GM12878 (cell line): ENCODE measurements at regions of chr21 and their contacts with region 1.

Region 1: DNA sequence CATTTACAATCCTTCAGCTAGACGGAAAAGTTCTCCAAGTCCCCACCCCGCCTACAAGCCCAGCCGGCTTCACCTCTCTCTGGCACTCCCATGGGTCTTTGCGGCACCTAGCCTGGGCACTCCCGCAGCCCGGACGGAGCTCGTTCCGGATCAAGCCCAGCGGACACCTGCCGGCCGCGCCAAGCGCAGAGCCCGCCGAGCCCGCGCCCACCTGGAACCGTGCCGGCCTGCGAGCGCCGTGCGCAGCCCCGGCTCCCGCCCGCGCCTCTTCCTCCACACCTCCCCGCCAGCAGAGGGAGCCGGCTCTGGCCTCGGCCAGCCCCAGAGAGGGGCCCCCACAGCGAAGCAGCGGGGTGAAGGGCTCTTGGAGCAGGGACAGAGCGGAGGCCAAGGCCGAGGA is 50.0 kb upstream of the KRTAP19-8 start:
- DNase-seq: no peak
- ATAC-seq: no peak
- H3K4me3 ChIP-seq: no peak overlapping the region
- H3K27ac ChIP-seq: no peak overlapping the region
- H3K4me1 ChIP-seq: no peaks in the 10 kb centered on the region
- H3K27me3 ChIP-seq: no peaks in the 10 kb centered on the region
- CTCF ChIP-seq: 0 out of 6 replicates have a peak, but pooled peaks of 1 of the 3 experiments have one; percentile 13
- EP300 ChIP-seq: no peak
- POLR2A ChIP-seq: no peak
- RAD21 ChIP-seq: no peak

Region 2: DNA sequence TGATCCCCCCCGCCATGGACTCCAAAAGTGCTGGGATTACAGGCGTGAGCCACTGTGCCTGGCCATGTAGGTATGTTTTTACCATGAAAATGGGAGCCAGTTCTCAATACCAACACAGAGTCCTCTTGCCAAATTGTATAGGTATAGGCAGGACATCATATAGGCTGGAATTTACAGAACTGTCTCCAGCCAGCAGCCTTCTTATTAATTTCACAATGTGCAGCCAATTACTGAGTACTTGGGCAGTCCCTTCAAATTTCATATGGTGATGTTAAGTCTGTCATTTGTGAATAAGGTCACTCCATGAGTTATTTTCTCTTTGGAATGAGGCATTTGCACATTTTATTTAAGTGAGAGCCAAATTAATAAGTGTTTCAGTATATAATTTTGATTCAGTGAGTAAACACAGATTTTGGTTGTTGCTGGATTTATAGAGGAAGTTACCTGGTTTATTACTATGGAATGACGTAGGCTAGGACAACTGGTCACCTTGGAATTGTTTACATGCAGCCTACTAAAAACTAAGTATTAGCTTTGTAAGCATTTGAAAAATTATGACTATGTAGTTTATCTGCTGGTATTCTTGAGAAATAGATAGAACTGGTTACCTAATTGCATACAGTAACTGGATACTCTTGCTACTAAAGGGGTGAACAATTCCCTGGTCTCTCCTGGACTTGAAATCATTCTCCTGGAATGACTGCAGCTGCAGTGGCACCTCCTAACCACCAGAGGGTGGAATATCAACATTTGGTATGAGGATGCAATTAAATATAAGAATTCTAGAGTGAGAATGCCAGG is 747.7 kb before region 1 on chr21:
- CTCF ChIA-PET with region 1: interaction called, 4 read pairs
- POLR2A ChIA-PET with region 1: no interaction called
- RAD21 ChIA-PET with region 1: interaction called, 5 read pairs
- SMC1A ChIA-PET with region 1: no interaction called
- in situ Hi-C with region 1: loop called (anchors 5 kb)
- intact Hi-C with region 1: loop called (anchors 1 kb)
- DNase-seq: no peak
- ATAC-seq: no peak
- H3K4me3 ChIP-seq: no peak overlapping the region
- H3K27ac ChIP-seq: no peak overlapping the region
- H3K4me1 ChIP-seq: no peaks in the 10 kb centered on the region
- H3K27me3 ChIP-seq: no peaks in the 10 kb centered on the region
- CTCF ChIP-seq: peak; percentile 51 to 68 (median 51)
- EP300 ChIP-seq: no peak
- POLR2A ChIP-seq: no peak
- RAD21 ChIP-seq: peak; percentile 48

Region 3: DNA sequence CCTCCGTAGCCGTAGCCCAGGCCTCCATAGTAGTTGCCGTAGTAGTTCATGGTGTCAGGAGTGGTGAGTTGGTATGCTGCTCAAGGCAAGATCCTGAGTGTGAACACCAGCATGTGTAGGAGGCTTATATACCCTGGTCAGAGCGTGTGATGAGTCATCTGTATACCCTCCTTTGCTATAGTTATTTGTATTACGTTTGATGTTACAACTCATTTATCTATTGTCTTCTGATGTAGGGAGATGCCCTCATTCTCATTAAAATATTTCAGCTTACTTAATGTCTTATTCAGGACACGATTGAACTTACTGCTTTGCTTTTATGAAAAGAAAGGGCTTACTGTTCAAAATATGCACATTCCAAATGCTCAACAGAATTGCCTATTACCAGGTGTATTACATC is 586.3 kb before region 1 on chr21 and contains the start of gene KRTAP19-5:
- CTCF ChIA-PET with region 1: interaction called, 14 read pairs
- POLR2A ChIA-PET with region 1: no interaction called
- RAD21 ChIA-PET with region 1: interaction called, 3 read pairs
- SMC1A ChIA-PET with region 1: no interaction called
- in situ Hi-C with region 1: no loop called
- intact Hi-C with region 1: loop called (anchors 2 kb)
- DNase-seq: no peak
- ATAC-seq: no peak
- H3K4me3 ChIP-seq: no peak within 1 kb of the TSS
- H3K27ac ChIP-seq: no peak within 1 kb of the TSS
- H3K4me1 ChIP-seq: no peaks in the 10 kb centered on the region
- H3K27me3 ChIP-seq: no peaks in the 10 kb centered on the region
- CTCF ChIP-seq: no peak
- EP300 ChIP-seq: no peak
- POLR2A ChIP-seq: no peak
- RAD21 ChIP-seq: no peak
- polyA plus RNA-seq, gene KRTAP19-5: not detected

Region 4: GRCh38 chr21:30839304-30839703 is 249.0 kb before region 1 on chr21:
- CTCF ChIA-PET with region 1: no interaction called
- POLR2A ChIA-PET with region 1: no interaction called
- RAD21 ChIA-PET with region 1: no interaction called
- SMC1A ChIA-PET with region 1: no interaction called
- in situ Hi-C with region 1: loop called (anchors 5 kb)
- intact Hi-C with region 1: no loop called
- DNase-seq: no peak
- ATAC-seq: peak; percentile 50; the same call in 2 of the 3 replicates
- H3K4me3 ChIP-seq: no peak overlapping the region
- H3K27ac ChIP-seq: no peak overlapping the region
- H3K4me1 ChIP-seq: no peaks in the 10 kb centered on the region
- H3K27me3 ChIP-seq: no peaks in the 10 kb centered on the region
- CTCF ChIP-seq: peak; percentile 16 to 46 (median 18); a peak in 3 of 6 replicates
- EP300 ChIP-seq: no peak
- POLR2A ChIP-seq: no peak
- RAD21 ChIP-seq: no peak